GM10248 (cell line): ENCODE measurements at regions of chr1 and their contacts with region 1.

Region 1: DNA sequence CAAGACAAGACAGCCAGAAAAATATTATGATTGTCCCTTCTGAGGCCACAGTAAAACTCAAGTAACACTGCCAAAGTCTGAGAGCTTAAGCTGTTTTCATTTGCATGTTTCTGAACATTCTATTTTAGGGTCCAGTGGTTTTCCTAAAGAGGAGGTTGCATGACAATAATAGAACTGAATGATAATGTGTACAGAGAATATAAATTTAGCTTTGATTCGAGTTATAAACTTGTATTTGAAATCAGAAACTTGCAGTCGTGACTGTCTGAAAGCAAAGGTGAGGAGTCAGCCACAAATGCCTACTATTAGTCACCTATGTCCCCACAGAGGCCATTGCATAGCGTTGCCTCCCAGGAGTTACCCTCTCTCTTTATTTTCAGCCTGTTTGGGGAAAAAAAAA is 363.1 kb upstream of the ADGRL2 start:
- DNase-seq: peak; percentile 18
- CTCF ChIP-seq: no peak

Region 2: GRCh38 chr1:81414488-81415015 is 23.1 kb before region 1 on chr1:
- CTCF ChIA-PET with region 1: interaction called, 13 read pairs
- POLR2A ChIA-PET with region 1: no interaction called
- DNase-seq: peak; percentile 57
- CTCF ChIP-seq: peak; percentile 81